ENCODE measurements at regions of chr7 and their contacts with region 1.

Region 1: GRCh38 chr7:129845178-129845971 is 107.4 kb downstream of the UBE2H start:
- DNase-seq: no peak
- H3K4me3 ChIP-seq: no peak overlapping the region
- H3K27ac ChIP-seq: peak overlapping the region; percentile 66
- H3K4me1 ChIP-seq: peaks cover 47% of the 10 kb centered on the region
- H3K27me3 ChIP-seq: no peaks in the 10 kb centered on the region
- CTCF ChIP-seq: no peak
- POLR2A ChIP-seq: no peak

Region 2: GRCh38 chr7:129923709-129924108 is 78.3 kb after region 1 on chr7:
- CTCF ChIA-PET with region 1: no interaction called
- POLR2A ChIA-PET with region 1: interaction called, 10 read pairs
- dilution Hi-C with region 1: no loop called
- intact Hi-C with region 1: no loop called
- DNase-seq: peak; percentile 81
- H3K4me3 ChIP-seq: no peak overlapping the region
- H3K27ac ChIP-seq: peak overlapping the region; percentile 37
- H3K4me1 ChIP-seq: peaks cover 30% of the 10 kb centered on the region
- H3K27me3 ChIP-seq: no peaks in the 10 kb centered on the region
- CTCF ChIP-seq: no peak
- POLR2A ChIP-seq: no peak

Region 3: GRCh38 chr7:129952653-129953560 is 107.5 kb after region 1 on chr7 and contains the start of gene UBE2H:
- CTCF ChIA-PET with region 1: no interaction called
- POLR2A ChIA-PET with region 1: no interaction called
- dilution Hi-C with region 1: no loop called
- intact Hi-C with region 1: loop called (anchors 2 kb)
- DNase-seq: peak; percentile 92
- H3K4me3 ChIP-seq: peak within 1 kb of the TSS; percentile 73 to 99 (median 91)
- H3K27ac ChIP-seq: peak within 1 kb of the TSS; percentile 97
- H3K4me1 ChIP-seq: peaks cover 23% of the 10 kb centered on the region
- H3K27me3 ChIP-seq: no peaks in the 10 kb centered on the region
- CTCF ChIP-seq: no peak
- POLR2A ChIP-seq: peak; percentile 90
- total RNA-seq, gene UBE2H: 82.2 and 90.1 TPM in 2 replicates

Region 4: DNA sequence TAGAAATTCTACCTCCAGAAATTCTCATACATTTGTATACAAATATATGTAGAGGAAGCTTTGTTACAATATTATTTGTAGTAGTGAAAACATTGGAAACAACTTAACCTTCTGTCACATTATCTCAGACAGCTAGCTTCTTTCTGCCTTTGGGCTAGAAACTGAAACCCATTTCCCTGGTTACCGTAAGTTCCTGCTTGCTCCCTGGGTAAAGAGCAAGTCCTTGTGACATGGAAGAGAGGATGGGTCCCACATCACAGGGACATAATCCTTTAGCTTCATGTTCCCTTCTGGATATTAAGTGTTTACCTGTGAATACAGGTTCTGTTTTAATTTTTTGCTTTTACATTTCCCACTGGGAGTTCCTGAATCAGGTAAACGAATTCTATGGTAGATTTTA is 266.7 kb after region 1 on chr7:
- CTCF ChIA-PET with region 1: no interaction called
- POLR2A ChIA-PET with region 1: no interaction called
- dilution Hi-C with region 1: no loop called
- intact Hi-C with region 1: no loop called
- DNase-seq: no peak
- H3K4me3 ChIP-seq: no peak overlapping the region
- H3K27ac ChIP-seq: no peak overlapping the region
- H3K4me1 ChIP-seq: no peaks in the 10 kb centered on the region
- H3K27me3 ChIP-seq: no peaks in the 10 kb centered on the region
- CTCF ChIP-seq: no peak
- POLR2A ChIP-seq: no peak